Left cardiac atrium (tissue), 4 donors: ENCODE measurements at regions of chr11 and their contacts with region 1.

Region 1: GRCh38 chr11:96168623-96169022 is 174.4 kb downstream of the MAML2 start:
- DNase-seq: peak; percentile 28
- ATAC-seq: peak; percentile 91

Region 2: DNA sequence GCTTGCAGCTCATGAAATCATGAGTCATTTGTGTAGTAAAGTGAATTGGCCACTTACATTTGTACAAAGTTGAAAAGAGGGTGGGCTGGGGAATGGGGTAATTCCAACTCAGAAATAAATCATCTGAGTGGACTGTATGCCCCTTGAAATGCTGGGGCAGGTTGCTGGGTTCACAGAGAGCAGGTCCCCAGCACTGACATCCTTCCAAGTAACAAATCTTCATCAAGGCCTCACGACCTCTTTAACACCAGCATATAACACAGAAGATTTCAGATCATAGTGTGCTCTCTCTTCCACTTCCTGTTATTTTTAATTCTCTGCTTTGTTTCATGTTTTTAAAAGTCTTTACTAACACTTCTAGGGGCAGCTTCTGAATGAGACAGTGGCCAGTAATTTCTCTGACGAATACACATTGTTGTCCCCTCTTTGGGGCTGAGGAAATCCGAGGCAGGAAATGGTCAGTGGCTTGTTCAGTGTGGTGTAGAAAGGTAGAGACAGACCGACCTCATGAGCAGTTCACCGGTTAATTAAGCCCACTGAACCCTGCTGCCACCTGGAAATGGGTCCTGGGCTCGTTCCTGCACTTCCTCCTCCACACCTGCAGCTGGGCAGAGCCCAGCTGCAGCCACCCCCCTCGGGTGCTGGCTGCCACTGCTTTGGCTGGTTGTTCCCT is 46.6 kb after region 1 on chr11:
- intact Hi-C with region 1: loop called in 1 of 2 experiments (anchors 10 kb)
- DNase-seq: no peak
- ATAC-seq: peak; percentile 12 to 25

Region 3: DNA sequence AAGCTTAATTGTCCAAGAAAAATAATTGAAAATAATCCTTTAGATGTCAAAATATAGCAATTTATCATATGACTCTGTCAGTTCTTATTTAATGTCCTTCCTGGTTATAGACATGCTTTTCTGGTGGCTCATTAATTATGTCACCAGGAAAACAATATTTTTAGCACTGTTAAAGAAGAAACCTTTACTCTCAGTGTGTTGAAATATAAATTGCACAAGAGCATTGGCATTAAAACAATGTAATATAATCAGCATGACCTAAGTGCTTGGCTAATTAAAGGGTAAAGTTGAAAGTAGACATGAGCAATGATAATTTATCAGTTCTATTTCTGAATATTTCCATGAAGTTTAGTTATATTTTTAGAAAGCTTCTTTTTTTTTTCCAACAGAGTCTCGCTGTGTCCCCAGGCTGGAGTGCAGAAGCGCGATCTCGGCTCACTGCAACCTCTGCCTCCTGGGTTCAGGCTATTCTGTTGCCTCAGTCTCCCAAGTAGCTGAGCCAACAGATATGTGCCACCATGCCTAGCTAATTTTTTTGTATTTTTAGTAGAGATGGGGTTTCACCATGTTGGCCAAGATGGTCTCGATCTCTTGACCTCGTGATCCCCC is 453.5 kb after region 1 on chr11:
- intact Hi-C with region 1: no loop called
- DNase-seq: no peak
- ATAC-seq: peak; percentile 45 to 63